CD4-positive, alpha-beta memory T cell (primary cell): ENCODE measurements at regions of chr19 and their contacts with region 1.

Region 1: GRCh38 chr19:45902651-45903625 is 525 bp upstream of the MYPOP start:
- DNase-seq: peak; percentile 97 to 100 (median 100)
- H3K4me3 ChIP-seq: peak overlapping the region; percentile 86 to 90
- H3K4me3 Mint-ChIP-seq: peak overlapping the region; percentile 83 to 97 (median 95)
- H3K27ac ChIP-seq: peak overlapping the region; percentile 79
- H3K27ac Mint-ChIP-seq: peak overlapping the region; percentile 83 to 96 (median 95)
- H3K4me1 ChIP-seq: peaks cover 19% of the 10 kb centered on the region
- H3K4me1 Mint-ChIP-seq: peaks cover 9 to 32% (median 12%) of the 10 kb centered on the region in 4 donors
- H3K27me3 ChIP-seq: no peaks in the 10 kb centered on the region
- H3K27me3 Mint-ChIP-seq: no peaks in the 10 kb centered on the region

Region 2: DNA sequence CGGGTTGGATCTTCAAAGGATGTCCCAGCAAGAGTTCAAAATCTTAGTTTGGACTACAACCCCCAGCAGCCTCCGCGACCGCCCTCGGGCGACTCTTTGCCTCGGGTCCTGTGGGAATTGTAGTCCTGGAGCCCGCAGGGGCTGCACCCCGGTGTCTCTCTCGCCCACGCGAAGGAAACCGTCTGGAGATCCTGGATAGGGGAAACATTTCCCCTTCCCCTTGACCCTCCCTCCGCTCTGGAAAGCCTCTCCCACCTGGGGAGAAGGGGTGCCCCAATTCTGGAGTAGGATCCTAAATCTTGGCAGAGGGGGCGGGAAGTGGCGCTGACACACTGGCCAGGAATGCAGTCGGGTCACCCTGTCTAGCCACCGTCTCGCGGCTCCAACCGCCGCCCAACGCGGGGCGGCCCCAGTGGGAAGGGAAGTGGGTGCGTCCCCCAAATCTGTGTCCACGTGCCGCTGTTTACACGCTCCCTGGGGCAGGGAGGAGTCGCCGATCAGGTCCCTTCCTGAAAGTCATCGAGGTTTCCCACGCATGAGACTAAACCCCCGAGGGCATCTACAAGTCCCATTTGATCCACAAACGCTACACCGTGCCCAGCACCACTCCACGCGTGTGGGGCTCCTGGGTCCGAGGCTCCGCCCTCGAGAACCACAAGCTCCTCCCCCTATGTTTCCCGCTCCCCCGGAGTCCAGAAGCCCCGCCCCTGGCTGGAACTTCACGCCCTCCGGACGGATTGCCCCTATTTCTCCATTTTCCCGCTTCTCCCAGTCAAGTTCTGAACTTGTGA is 497.3 kb before region 1 on chr19:
- CTCF ChIA-PET with region 1: no interaction called
- POLR2A ChIA-PET with region 1: no interaction called
- intact Hi-C with region 1: loop called (anchors 2 kb)
- DNase-seq: peak; percentile 80 to 91 (median 82)
- H3K4me3 ChIP-seq: peak overlapping the region; percentile 91 to 94
- H3K4me3 Mint-ChIP-seq: peak overlapping the region; percentile 90 to 99 (median 97)
- H3K27ac ChIP-seq: peak overlapping the region; percentile 65
- H3K27ac Mint-ChIP-seq: peak overlapping the region; percentile 69 to 99 (median 96)
- H3K4me1 ChIP-seq: peaks cover 35% of the 10 kb centered on the region
- H3K4me1 Mint-ChIP-seq: peaks cover 13 to 35% (median 26%) of the 10 kb centered on the region in 4 donors
- H3K27me3 ChIP-seq: peaks cover 16% of the 10 kb centered on the region
- H3K27me3 Mint-ChIP-seq: peaks cover 12 to 22% of the 10 kb centered on the region in 2 donors

Region 3: DNA sequence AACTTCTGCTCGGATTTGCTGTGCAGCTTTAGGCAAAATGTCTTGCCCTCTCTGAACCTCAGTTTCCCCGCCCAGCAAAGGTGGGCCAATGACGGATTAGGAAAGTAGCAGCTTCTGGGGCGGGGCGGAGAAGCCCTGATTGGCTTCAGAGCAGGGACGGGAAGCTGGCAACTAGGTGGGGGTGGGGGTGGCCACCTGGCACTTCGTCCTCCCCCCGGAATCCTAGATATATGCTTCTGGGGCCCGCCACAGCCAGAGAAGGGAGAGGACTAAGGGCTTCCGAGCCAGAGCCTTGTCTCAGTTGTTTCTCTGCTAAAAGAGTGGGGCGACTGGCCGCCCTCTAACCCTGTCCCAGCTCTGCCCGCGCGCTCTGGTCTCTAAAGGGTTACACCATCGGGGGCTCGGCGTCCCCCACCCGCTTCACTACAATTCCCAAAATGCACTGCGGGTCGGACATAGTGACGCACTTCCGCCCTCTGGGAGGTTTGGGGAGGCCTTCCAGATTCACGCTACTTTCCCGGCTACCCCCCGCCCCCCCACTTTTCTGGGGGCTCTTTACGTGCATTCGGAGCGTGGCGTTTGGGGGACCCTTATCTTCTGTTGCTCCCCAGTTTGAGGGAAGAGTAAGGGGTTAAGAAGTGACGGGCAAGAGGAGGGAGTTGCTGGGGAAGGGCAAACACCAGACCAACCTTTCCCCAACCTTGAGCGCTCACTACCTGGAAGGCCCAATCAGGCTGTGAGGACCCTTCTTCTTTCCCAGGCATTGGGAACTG is 16.3 kb before region 1 on chr19:
- CTCF ChIA-PET with region 1: interaction called, 10 read pairs
- POLR2A ChIA-PET with region 1: interaction called, 83 read pairs
- intact Hi-C with region 1: loop called (anchors 1 kb)
- DNase-seq: peak; percentile 87 to 93 (median 91)
- H3K4me3 ChIP-seq: peak overlapping the region; percentile 65 to 71
- H3K4me3 Mint-ChIP-seq: peak overlapping the region; percentile 94 to 98 (median 98)
- H3K27ac ChIP-seq: peak overlapping the region; percentile 68
- H3K27ac Mint-ChIP-seq: peak overlapping the region; percentile 97 to 99 (median 99)
- H3K4me1 ChIP-seq: peaks cover 40% of the 10 kb centered on the region
- H3K4me1 Mint-ChIP-seq: peaks cover 11 to 36% (median 19%) of the 10 kb centered on the region in 4 donors
- H3K27me3 ChIP-seq: no peaks in the 10 kb centered on the region
- H3K27me3 Mint-ChIP-seq: peaks cover 0 to under 1% of the 10 kb centered on the region in 2 donors

Region 4: DNA sequence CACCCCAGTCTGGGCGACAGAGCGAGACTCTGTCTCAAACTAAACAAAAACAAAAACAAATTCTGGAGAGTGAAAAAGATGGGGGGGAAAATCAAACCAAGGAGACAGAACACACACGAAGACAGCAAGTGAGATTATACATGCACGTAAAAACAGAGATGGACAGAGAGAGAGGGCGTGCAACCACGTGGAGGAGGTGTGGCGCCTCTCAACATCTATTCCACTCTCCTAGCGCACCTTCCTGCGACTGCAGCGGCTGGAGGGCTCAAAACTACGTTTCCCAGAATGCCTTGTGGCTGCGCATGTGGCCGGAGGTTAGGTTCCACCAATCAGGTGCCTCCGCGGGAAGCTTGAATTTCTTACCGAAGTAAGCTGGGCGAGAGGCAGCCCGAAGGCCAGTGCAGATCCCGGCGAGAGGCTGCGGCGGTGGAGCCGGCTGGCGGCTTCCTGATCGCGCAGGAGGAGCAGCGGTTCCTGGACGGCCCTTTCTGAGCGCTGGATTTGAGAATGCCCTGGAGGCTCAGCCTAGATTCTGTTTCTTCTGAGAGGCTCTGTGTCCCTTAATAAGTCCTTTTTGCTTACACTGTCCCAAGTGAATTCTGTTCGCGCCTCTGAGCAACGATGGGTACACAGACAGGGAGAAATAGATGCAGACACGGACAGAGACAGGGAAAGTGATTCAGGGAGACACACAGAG is 24.8 kb after region 1 on chr19:
- CTCF ChIA-PET with region 1: interaction called, 3 read pairs
- POLR2A ChIA-PET with region 1: interaction called, 6 read pairs
- intact Hi-C with region 1: loop called (anchors 1 kb)
- DNase-seq: peak; percentile 85 to 90 (median 87)
- H3K4me3 ChIP-seq: no peak overlapping the region
- H3K4me3 Mint-ChIP-seq: peak overlapping the region in 5 of 8 donors; percentile 12 to 69 (median 27)
- H3K27ac ChIP-seq: no peak overlapping the region
- H3K27ac Mint-ChIP-seq: peak overlapping the region in 3 of 7 donors; percentile 43 to 84 (median 70)
- H3K4me1 ChIP-seq: peaks cover 8% of the 10 kb centered on the region
- H3K4me1 Mint-ChIP-seq: peaks cover 2 to 12% (median 6%) of the 10 kb centered on the region in 4 donors
- H3K27me3 ChIP-seq: no peaks in the 10 kb centered on the region
- H3K27me3 Mint-ChIP-seq: peaks cover 5 to 8% of the 10 kb centered on the region in 2 donors

Region 5: DNA sequence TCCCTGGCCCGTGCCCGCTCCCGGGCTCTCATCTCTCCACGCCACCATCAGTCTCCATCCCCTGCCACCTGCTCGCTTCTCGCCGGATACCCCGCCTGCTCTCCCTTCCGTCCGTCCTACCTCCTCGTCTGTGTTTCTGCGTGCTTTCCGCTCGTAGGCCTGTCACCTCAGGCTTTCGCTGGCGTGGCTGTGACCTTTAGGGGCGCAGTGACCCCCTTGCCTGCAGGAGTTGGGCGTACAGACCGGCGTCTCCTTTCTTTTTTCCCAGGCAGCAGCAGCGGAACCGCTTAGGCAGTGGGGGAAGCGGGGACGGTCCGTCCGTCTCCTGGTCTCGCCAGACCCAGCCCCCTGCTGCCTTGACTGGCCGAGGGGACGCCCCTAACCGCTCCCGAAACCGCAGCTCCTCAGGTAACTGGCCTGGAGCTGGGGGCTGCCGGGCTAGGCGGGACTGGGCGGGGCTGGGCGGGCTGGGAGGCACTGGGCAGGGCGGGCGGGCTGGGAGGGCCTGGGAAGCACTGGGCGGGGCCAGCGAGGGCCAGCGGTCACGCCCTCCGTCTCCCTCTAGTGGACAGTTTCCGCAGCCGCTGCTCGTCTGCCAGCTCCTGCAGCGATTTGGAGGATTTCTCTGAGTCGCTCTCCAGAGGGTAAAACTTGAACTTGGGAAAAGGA is 113.6 kb after region 1 on chr19:
- CTCF ChIA-PET with region 1: no interaction called
- POLR2A ChIA-PET with region 1: interaction called, 3 read pairs
- intact Hi-C with region 1: loop called (anchors 5 kb)
- DNase-seq: peak; percentile 69 to 79 (median 76)
- H3K4me3 ChIP-seq: peak overlapping the region; percentile 76 to 80
- H3K4me3 Mint-ChIP-seq: peak overlapping the region; percentile 86 to 94 (median 91)
- H3K27ac ChIP-seq: peak overlapping the region; percentile 53
- H3K27ac Mint-ChIP-seq: peak overlapping the region; percentile 10 to 88 (median 71)
- H3K4me1 ChIP-seq: peaks cover 14% of the 10 kb centered on the region
- H3K4me1 Mint-ChIP-seq: peaks cover 12 to 21% (median 16%) of the 10 kb centered on the region in 4 donors
- H3K27me3 ChIP-seq: no peaks in the 10 kb centered on the region
- H3K27me3 Mint-ChIP-seq: peaks cover 0 to 5% of the 10 kb centered on the region in 2 donors